SK-N-SH (cell line): ENCODE measurements at regions of chr6 and their contacts with region 1.

Region 1: GRCh38 chr6:25263657-25264056 is 15.5 kb upstream of the CARMIL1 start:
- DNase-seq: no peak
- H3K4me3 ChIP-seq: no peak overlapping the region
- H3K27ac ChIP-seq: peak overlapping the region in 1 of 2 experiments; percentile 85; a peak in 2 of 4 replicates
- H3K4me1 ChIP-seq: no peaks in the 10 kb centered on the region
- H3K27me3 ChIP-seq: no peaks in the 10 kb centered on the region
- CTCF ChIP-seq: no peak
- EP300 ChIP-seq: peak in 1 of 2 experiments; percentile 85; a peak in 2 of 4 replicates
- RAD21 ChIP-seq: no peak

Region 2: DNA sequence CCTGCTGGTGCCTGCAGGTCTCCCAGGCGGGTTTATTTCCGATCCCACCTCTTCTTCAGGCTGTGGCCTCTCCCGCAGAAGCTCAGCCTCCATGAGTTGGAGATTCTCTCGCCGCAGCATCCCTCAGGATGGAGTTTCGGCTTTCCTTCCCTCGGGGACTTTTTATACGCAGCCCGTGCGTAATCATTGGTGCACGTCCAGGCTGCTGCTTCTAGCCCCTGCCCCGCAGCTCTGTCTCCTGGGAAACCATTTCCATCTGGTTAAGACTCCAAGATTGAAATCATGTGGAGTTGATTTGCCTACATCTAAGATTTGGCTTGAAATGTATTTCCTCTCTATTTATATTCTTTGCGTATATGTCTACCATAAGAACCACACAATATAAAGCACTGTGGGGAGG is 31.2 kb before region 1 on chr6:
- CTCF ChIA-PET with region 1: interaction called, 14 read pairs
- POLR2A ChIA-PET with region 1: no interaction called
- DNase-seq: peak; percentile 66
- H3K4me3 ChIP-seq: no peak overlapping the region
- H3K27ac ChIP-seq: no peak overlapping the region
- H3K4me1 ChIP-seq: peaks cover 0 to 27% of the 10 kb centered on the region in 2 experiments; a peak in 3 of 4 replicates
- H3K27me3 ChIP-seq: no peaks in the 10 kb centered on the region
- CTCF ChIP-seq: no peak
- EP300 ChIP-seq: no peak
- RAD21 ChIP-seq: no peak

Region 3: GRCh38 chr6:25278914-25279747 is 15.5 kb after region 1 on chr6 and contains the start of gene CARMIL1:
- CTCF ChIA-PET with region 1: interaction called, 39 read pairs
- POLR2A ChIA-PET with region 1: no interaction called
- DNase-seq: peak; percentile 94
- H3K4me3 ChIP-seq: peak within 1 kb of the TSS; percentile 82 to 95
- H3K27ac ChIP-seq: peak within 1 kb of the TSS; percentile 41 to 60; a peak in 2 of 4 replicates
- H3K4me1 ChIP-seq: peaks cover 0 to 14% of the 10 kb centered on the region in 2 experiments; a peak in 2 of 4 replicates
- H3K27me3 ChIP-seq: no peaks in the 10 kb centered on the region
- CTCF ChIP-seq: peak; percentile 73
- EP300 ChIP-seq: no peak; a peak in 1 of 4 replicates
- RAD21 ChIP-seq: peak; percentile 83
- polyA plus RNA-seq, gene CARMIL1: 1.7 TPM in 2 replicates

Region 4: GRCh38 chr6:25556516-25556915 is 292.9 kb after region 1 on chr6:
- CTCF ChIA-PET with region 1: interaction called, 45 read pairs
- POLR2A ChIA-PET with region 1: no interaction called
- DNase-seq: peak; percentile 36
- H3K4me3 ChIP-seq: no peak overlapping the region; a peak in 1 of 4 replicates
- H3K27ac ChIP-seq: no peak overlapping the region
- H3K4me1 ChIP-seq: peaks cover 0 to 6% of the 10 kb centered on the region in 2 experiments; a peak in 2 of 4 replicates
- H3K27me3 ChIP-seq: no peaks in the 10 kb centered on the region
- CTCF ChIP-seq: peak; percentile 95
- EP300 ChIP-seq: no peak
- RAD21 ChIP-seq: peak; percentile 77

Region 5: GRCh38 chr6:25717866-25718740 is 454.4 kb after region 1 on chr6:
- CTCF ChIA-PET with region 1: interaction called, 10 read pairs
- POLR2A ChIA-PET with region 1: no interaction called
- DNase-seq: peak; percentile 44
- H3K4me3 ChIP-seq: no peak overlapping the region
- H3K27ac ChIP-seq: no peak overlapping the region
- H3K4me1 ChIP-seq: peaks cover 0 to 10% of the 10 kb centered on the region in 2 experiments; a peak in 1 of 4 replicates
- H3K27me3 ChIP-seq: no peaks in the 10 kb centered on the region
- CTCF ChIP-seq: peak; percentile 79
- EP300 ChIP-seq: no peak
- RAD21 ChIP-seq: peak; percentile 72